ENCODE measurements at regions of chr4 and their contacts with region 1.

Region 1: DNA sequence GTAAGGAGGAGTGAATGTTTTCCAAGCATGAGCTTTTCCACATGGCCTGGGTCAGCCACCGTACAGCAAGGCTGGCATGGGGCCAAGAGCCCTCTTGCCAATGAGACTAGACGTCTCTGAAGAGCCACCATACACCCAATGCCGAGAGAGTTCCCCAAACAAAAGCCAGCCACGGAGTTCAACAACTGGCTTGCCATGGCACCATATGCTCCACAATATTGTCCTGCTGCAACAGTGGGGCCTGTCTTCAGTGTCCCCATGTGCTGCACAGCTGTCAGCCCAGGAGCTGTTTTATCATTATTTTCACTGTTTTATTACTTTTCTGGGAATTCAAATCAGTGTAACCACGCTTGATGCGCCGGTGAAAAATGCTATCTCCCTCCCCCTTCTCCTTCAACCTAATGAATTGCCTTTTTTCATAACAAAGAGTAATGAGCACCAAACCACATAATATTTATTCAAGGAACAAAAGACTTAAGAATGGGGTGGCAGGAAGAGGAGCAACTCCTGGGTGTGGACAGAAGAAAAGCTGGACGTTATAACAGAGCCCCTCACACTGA is 18.4 kb downstream of the MAML3 start:
- DNase-seq: no peak
- H3K4me3 ChIP-seq: no peak overlapping the region
- H3K4me3 Mint-ChIP-seq: no peak overlapping the region
- H3K27ac Mint-ChIP-seq: peak overlapping the region; percentile 88
- H3K4me1 ChIP-seq: peaks cover 70% of the 10 kb centered on the region
- H3K4me1 Mint-ChIP-seq: peaks cover 25% of the 10 kb centered on the region
- H3K27me3 ChIP-seq: no peaks in the 10 kb centered on the region
- H3K27me3 Mint-ChIP-seq: no peaks in the 10 kb centered on the region
- CTCF ChIP-seq: no peak

Region 2: GRCh38 chr4:139734875-139735380 is 400.7 kb before region 1 on chr4:
- CTCF ChIA-PET with region 1: no interaction called
- POLR2A ChIA-PET with region 1: no interaction called
- intact Hi-C with region 1: loop called (anchors 5 kb)
- DNase-seq: peak; percentile 82 to 89
- H3K4me3 ChIP-seq: peak overlapping the region; percentile 29
- H3K4me3 Mint-ChIP-seq: peak overlapping the region; percentile 69
- H3K27ac Mint-ChIP-seq: peak overlapping the region; percentile 78
- H3K4me1 ChIP-seq: peaks cover 39% of the 10 kb centered on the region
- H3K4me1 Mint-ChIP-seq: peaks cover 22% of the 10 kb centered on the region
- H3K27me3 ChIP-seq: no peaks in the 10 kb centered on the region
- H3K27me3 Mint-ChIP-seq: no peaks in the 10 kb centered on the region
- CTCF ChIP-seq: peak; percentile 76 to 82

Region 3: DNA sequence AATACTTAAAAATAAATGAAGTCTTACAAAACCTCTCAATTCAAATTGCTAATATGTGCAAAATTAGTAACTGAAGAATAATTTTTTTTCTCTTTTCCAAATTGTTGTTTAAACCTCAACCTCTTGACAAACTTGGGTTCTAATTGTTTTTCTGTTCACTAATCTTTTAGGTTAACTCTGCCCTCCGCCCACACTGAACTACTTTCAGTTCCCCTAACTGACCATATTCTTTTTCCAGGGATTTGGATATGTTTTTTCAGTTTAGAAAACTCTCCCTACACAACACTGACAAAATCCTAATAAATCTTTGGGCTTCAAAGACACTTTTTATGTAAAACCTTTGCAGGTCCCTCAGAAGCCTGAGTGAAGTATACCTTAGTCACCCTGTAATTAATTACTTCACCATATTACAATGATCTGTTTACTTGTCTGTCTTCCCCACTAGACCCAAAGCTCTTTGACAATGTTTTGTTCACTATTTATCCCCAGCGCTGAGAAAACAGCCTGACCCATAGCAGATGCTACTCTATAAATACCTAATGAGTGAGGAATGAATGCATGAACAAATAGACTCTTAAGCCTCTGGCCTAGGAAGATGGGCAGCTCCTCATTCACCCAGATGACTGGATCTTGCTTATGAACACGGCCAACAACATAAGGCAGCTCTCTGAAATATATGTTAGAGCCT is 116.5 kb before region 1 on chr4:
- CTCF ChIA-PET with region 1: no interaction called
- POLR2A ChIA-PET with region 1: no interaction called
- intact Hi-C with region 1: loop called (anchors 1 kb)
- DNase-seq: peak; percentile 44 to 52
- H3K4me3 ChIP-seq: no peak overlapping the region
- H3K4me3 Mint-ChIP-seq: peak overlapping the region; percentile 60
- H3K27ac Mint-ChIP-seq: peak overlapping the region; percentile 66
- H3K4me1 ChIP-seq: peaks cover 50% of the 10 kb centered on the region
- H3K4me1 Mint-ChIP-seq: peaks cover 54% of the 10 kb centered on the region
- H3K27me3 ChIP-seq: no peaks in the 10 kb centered on the region
- H3K27me3 Mint-ChIP-seq: no peaks in the 10 kb centered on the region
- CTCF ChIP-seq: no peak

Region 4: GRCh38 chr4:140037357-140038030 is 98.1 kb before region 1 on chr4:
- CTCF ChIA-PET with region 1: no interaction called
- POLR2A ChIA-PET with region 1: no interaction called
- intact Hi-C with region 1: loop called (anchors 1 kb)
- DNase-seq: peak; percentile 68 to 80
- H3K4me3 ChIP-seq: no peak overlapping the region
- H3K4me3 Mint-ChIP-seq: peak overlapping the region; percentile 8
- H3K27ac Mint-ChIP-seq: peak overlapping the region; percentile 16
- H3K4me1 ChIP-seq: peaks cover 44% of the 10 kb centered on the region
- H3K4me1 Mint-ChIP-seq: peaks cover 44% of the 10 kb centered on the region
- H3K27me3 ChIP-seq: no peaks in the 10 kb centered on the region
- H3K27me3 Mint-ChIP-seq: no peaks in the 10 kb centered on the region
- CTCF ChIP-seq: no peak

Region 5: DNA sequence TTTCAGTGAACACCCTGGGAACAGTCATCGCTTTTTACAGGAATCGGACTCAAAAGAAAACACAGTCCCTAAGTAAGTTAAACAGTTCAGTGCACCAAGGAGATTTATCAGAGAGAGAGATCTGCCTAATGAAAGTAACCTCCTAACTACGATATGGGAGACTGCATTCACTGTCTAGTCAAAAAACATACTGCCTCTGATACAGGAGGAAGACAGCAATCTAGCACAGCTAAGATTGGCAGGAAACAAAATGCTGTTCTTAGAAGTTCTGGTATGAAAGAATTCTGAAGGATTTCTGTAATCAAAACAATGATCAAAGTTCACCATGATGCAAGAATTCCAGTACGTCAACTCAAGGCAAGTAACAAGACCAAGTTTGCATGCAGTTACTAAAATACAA is 74.4 kb before region 1 on chr4:
- CTCF ChIA-PET with region 1: no interaction called
- POLR2A ChIA-PET with region 1: no interaction called
- intact Hi-C with region 1: loop called (anchors 2 kb)
- DNase-seq: peak in 1 of 2 experiments; percentile 41
- H3K4me3 ChIP-seq: no peak overlapping the region
- H3K4me3 Mint-ChIP-seq: peak overlapping the region; percentile 38
- H3K27ac Mint-ChIP-seq: peak overlapping the region; percentile 62
- H3K4me1 ChIP-seq: peaks cover 61% of the 10 kb centered on the region
- H3K4me1 Mint-ChIP-seq: peaks cover 48% of the 10 kb centered on the region
- H3K27me3 ChIP-seq: no peaks in the 10 kb centered on the region
- H3K27me3 Mint-ChIP-seq: no peaks in the 10 kb centered on the region
- CTCF ChIP-seq: no peak

Region 6: GRCh38 chr4:140085062-140085622 is 50.5 kb before region 1 on chr4:
- CTCF ChIA-PET with region 1: no interaction called
- POLR2A ChIA-PET with region 1: no interaction called
- intact Hi-C with region 1: loop called (anchors 5 kb)
- DNase-seq: peak; percentile 70 to 75
- H3K4me3 ChIP-seq: no peak overlapping the region
- H3K4me3 Mint-ChIP-seq: peak overlapping the region; percentile 56
- H3K27ac Mint-ChIP-seq: peak overlapping the region; percentile 82
- H3K4me1 ChIP-seq: peaks cover 61% of the 10 kb centered on the region
- H3K4me1 Mint-ChIP-seq: peaks cover 69% of the 10 kb centered on the region
- H3K27me3 ChIP-seq: no peaks in the 10 kb centered on the region
- H3K27me3 Mint-ChIP-seq: no peaks in the 10 kb centered on the region
- CTCF ChIP-seq: no peak

Region 7: DNA sequence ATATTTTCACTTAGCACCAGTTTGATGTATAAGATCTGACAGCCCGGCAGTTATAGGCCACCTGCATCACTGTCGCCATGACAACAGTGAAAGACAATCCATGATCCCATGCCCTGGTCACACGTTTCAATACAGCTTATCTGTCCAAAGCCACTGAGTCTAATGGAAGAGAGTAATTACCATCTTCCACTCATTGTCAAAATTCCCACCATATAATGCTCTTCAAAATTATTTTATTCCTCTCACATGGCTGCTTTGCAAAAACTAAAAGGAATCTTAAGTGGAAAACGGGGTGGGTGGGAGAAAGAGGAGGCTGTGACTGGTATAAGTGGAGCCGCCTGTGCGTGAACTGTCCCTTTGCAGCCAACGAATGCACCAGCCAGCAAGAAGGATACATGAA is 25.9 kb before region 1 on chr4:
- CTCF ChIA-PET with region 1: no interaction called
- POLR2A ChIA-PET with region 1: no interaction called
- intact Hi-C with region 1: loop called (anchors 2 kb)
- DNase-seq: no peak
- H3K4me3 ChIP-seq: no peak overlapping the region
- H3K4me3 Mint-ChIP-seq: no peak overlapping the region
- H3K27ac Mint-ChIP-seq: no peak overlapping the region
- H3K4me1 ChIP-seq: peaks cover 33% of the 10 kb centered on the region
- H3K4me1 Mint-ChIP-seq: peaks cover 21% of the 10 kb centered on the region
- H3K27me3 ChIP-seq: no peaks in the 10 kb centered on the region
- H3K27me3 Mint-ChIP-seq: no peaks in the 10 kb centered on the region
- CTCF ChIP-seq: no peak